ENCODE measurements at regions of chr1 and their contacts with region 1.

Region 1: GRCh38 chr1:235971571-235972310 is 93.1 kb downstream of the NID1 start:
- DNase-seq: peak; percentile 94
- ATAC-seq: peak; percentile 99
- H3K4me3 Mint-ChIP-seq: peak overlapping the region; percentile 75
- H3K27ac Mint-ChIP-seq: peak overlapping the region; percentile 91
- H3K4me1 Mint-ChIP-seq: peaks cover 22% of the 10 kb centered on the region
- H3K27me3 Mint-ChIP-seq: peaks cover 2% of the 10 kb centered on the region

Region 2: DNA sequence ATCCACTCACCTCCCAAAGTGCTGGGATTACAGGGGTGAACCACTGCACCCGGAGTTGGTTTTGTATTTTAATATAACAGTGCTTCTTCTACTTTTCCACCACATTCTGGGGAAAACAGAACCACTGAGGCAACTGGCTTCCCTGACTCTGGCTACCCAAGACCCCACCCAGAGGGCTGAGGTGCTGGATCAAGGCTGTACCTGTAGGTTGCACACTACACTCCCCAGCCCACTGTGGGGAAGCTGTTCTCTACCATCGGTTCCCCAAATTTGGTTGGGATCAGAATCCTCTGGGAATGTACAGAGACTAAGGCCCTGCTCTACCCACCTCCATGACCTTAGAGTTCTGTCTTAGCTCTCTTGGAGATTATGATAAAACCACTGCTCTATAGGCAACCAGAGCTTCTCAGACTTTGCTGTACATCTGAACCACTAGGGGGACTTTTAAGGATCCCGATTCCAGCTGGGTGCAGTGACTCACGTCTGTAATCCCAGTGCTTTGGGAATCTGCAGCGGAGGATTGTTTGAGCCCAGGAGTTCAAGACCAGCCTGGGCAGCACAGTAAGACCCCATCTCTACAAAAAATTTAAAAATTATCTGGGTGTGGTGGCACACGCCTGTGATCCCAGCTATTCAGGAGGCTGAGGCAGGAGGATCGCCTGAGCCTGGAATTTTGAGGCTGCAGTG is 373.7 kb before region 1 on chr1:
- CTCF ChIA-PET with region 1: interaction called, 14 read pairs
- POLR2A ChIA-PET with region 1: no interaction called
- DNase-seq: no peak
- ATAC-seq: no peak
- H3K4me3 Mint-ChIP-seq: no peak overlapping the region
- H3K27ac Mint-ChIP-seq: no peak overlapping the region
- H3K4me1 Mint-ChIP-seq: peaks cover 10% of the 10 kb centered on the region
- H3K27me3 Mint-ChIP-seq: peaks cover 8% of the 10 kb centered on the region

Region 3: DNA sequence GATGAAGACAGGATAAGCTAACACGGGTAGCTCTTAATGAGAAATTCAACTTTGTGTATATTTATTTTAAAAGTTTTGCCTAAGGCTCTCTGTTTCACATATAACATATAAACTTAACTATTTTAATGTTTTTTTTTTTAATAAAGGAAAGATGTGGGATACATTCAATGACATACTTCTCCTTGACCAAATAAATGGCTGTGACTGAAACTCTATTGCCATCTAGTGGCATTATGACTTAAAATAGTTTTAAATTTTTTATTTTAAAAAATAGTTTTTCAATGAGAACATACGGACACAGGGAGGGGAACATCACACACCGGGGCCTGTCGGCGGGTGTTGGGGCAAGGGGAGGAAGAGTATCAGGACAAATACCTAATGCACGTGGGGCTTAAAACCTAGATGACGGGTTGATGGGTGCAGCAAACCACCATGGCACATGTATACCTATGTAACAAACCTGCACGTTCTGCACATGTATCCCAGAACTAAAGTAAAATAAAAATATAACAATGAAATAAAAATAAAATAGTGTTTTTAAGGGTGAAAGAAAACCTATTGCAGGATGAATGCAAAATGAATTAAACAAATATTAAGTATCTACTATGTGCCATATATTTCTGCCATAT is 188.5 kb before region 1 on chr1:
- CTCF ChIA-PET with region 1: interaction called, 28 read pairs
- POLR2A ChIA-PET with region 1: no interaction called
- DNase-seq: no peak
- ATAC-seq: no peak
- H3K4me3 Mint-ChIP-seq: no peak overlapping the region
- H3K27ac Mint-ChIP-seq: no peak overlapping the region
- H3K4me1 Mint-ChIP-seq: no peaks in the 10 kb centered on the region
- H3K27me3 Mint-ChIP-seq: no peaks in the 10 kb centered on the region

Region 4: GRCh38 chr1:235855811-235856429 is 115.8 kb before region 1 on chr1:
- CTCF ChIA-PET with region 1: interaction called, 21 read pairs
- POLR2A ChIA-PET with region 1: interaction called, 6 read pairs
- DNase-seq: no peak
- ATAC-seq: peak; percentile 59
- H3K4me3 Mint-ChIP-seq: no peak overlapping the region
- H3K27ac Mint-ChIP-seq: peak overlapping the region; percentile 39
- H3K4me1 Mint-ChIP-seq: peaks cover 47% of the 10 kb centered on the region
- H3K27me3 Mint-ChIP-seq: no peaks in the 10 kb centered on the region

Region 5: DNA sequence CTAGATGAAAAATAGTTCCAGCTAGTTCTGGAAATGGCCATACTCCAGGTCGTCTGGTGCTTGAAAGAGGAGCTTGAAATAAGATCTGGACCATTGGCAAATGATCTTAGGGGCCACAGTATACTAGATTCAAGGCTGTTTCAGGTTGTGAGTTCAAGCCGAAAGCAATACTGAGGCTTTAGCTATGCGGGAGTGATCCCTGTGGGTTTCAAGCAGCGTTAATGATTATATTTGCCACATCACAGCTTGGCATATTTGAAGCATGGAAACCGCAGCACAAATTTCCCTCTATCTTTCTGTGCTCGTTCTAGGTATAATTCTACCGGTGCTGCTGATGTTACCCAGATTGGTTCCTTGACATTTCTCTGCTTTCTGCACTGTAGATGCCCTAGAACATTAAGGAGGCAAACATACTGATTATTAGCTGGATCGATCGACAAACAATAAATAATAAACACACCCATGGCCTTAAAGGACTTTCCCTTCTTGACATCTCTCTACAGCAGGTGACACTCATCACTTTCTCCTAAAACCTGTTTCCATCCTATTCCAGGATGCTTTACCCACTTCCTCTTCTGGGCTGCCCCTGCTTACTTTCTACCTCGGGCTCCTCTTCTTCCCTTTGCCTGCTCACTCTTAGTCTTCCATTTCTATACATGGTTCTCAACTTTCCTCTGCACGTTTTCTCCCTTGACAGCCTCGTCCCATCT is 64.4 kb before region 1 on chr1:
- CTCF ChIA-PET with region 1: interaction called, 16 read pairs
- POLR2A ChIA-PET with region 1: no interaction called
- DNase-seq: no peak
- ATAC-seq: no peak
- H3K4me3 Mint-ChIP-seq: no peak overlapping the region
- H3K27ac Mint-ChIP-seq: no peak overlapping the region
- H3K4me1 Mint-ChIP-seq: peaks cover 16% of the 10 kb centered on the region
- H3K27me3 Mint-ChIP-seq: no peaks in the 10 kb centered on the region

Region 6: GRCh38 chr1:235954306-235955283 is 17.1 kb before region 1 on chr1:
- CTCF ChIA-PET with region 1: interaction called, 127 read pairs
- POLR2A ChIA-PET with region 1: interaction called, 12 read pairs
- DNase-seq: peak; percentile 60
- ATAC-seq: peak; percentile 87
- H3K4me3 Mint-ChIP-seq: peak overlapping the region; percentile 20
- H3K27ac Mint-ChIP-seq: peak overlapping the region; percentile 23
- H3K4me1 Mint-ChIP-seq: peaks cover 34% of the 10 kb centered on the region
- H3K27me3 Mint-ChIP-seq: no peaks in the 10 kb centered on the region

Region 7: DNA sequence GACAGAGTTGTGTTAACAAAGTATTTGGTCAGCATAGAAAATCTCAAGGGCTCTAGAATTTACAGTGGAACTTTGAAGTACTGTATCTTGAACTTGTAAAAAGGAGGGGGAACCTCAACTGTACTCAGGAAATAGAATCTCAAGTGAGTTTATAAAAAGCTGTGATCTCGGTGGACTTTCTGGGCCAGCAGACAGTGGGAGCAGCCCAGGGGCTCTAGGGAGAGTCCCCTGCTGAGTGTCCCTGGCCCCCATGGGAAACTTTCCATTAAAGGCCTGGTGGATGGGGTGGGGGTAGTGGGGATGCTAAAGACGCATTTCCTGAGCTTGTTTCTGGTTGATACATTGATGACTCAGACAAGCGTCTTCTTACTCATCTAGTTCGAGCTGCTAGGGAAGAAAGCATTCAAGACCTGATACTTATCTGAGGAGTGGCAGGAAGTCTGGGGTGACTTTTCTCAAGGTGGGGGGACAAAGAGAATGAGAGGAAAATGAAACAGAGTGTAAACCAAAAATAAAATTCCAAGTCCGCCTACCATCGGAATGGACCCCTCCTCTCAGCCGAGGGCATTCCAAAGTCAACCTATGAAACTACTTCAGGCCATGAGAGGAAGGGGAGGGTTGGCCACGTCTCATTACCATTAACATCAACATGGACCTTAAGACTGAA is 27.7 kb after region 1 on chr1:
- CTCF ChIA-PET with region 1: interaction called, 57 read pairs
- POLR2A ChIA-PET with region 1: interaction called, 20 read pairs
- DNase-seq: peak; percentile 74
- ATAC-seq: peak; percentile 91
- H3K4me3 Mint-ChIP-seq: peak overlapping the region; percentile 49
- H3K27ac Mint-ChIP-seq: peak overlapping the region; percentile 96
- H3K4me1 Mint-ChIP-seq: peaks cover 72% of the 10 kb centered on the region
- H3K27me3 Mint-ChIP-seq: no peaks in the 10 kb centered on the region

Region 8: DNA sequence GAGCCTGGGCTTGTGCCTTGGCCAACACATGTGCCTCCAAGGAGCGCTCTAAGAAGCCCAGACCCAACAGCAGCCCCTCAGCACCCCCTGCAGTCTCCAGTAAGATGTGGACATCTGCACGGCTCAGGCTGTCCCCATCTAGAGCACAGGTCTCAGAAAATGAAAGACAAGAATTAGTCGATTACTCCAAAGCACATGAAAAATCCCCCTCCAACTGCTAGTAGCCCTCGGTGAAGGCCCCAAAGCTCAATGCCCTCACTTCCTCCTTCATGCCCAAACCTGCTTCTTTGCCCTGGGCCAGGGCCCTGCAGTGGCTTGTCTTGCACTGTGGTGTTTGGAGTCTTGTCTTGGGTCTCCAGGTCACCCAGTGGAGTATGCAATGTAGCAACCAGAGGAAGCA is 331.9 kb after region 1 on chr1:
- CTCF ChIA-PET with region 1: no interaction called
- POLR2A ChIA-PET with region 1: no interaction called
- DNase-seq: no peak
- ATAC-seq: no peak
- H3K4me3 Mint-ChIP-seq: no peak overlapping the region
- H3K27ac Mint-ChIP-seq: no peak overlapping the region
- H3K4me1 Mint-ChIP-seq: no peaks in the 10 kb centered on the region
- H3K27me3 Mint-ChIP-seq: no peaks in the 10 kb centered on the region

Measured in activated CD8-positive, alpha-beta T cell treated with anti-CD3 and anti-CD28 coated beads, Interleukin-2, amount 10 ng/mL, durations not matched to agents 7 days and 5 days (primary cell).